HAP-1 (cell line): ENCODE measurements at regions of chr20 and their contacts with region 1.

Region 1: DNA sequence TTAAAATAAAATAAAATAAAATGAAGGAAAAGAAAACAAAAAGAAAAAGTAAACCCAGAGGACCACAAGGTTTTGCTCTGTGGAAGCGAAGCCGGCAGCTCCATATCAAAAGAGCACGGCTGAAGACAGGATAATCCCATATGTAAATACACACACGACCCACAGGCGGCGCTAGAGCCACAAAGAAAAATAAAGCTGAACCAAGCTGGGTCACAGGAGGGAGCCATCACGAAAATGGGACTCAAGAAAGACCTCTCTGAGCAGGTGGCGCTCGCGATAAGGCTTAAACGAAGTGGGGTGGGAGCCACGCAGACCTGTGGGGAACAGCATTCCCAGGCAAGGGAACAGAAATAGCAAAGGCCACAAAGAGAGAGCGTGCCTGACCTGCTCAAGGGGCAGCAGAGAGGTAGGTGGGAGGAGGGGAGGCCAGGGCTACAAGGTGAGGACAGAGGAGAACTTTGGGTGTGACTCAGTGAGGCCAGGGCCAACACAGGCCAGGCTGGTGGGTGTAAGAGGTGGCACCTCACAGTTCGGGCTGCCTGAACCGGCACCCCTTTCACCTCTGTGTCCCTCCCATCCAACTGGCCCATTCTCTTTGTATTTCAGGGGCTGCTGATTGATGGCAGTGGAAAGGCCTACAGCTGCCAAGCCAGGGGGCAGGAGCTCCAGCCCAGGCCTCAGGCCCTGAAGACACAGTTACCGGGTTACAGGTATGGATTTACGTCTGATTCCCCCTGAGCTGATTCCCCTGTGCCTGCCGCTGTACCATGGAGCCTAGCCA is 26.0 kb downstream of the PTGIS start:
- DNase-seq: peak; percentile 58 to 77
- H3K4me3 ChIP-seq: no peak overlapping the region
- H3K4me1 ChIP-seq: no peaks in the 10 kb centered on the region
- H3K27me3 ChIP-seq: no peaks in the 10 kb centered on the region

Region 2: GRCh38 chr20:49888345-49888966 is 346.5 kb after region 1 on chr20:
- in situ Hi-C with region 1: loop called (anchors 10 kb)
- DNase-seq: peak; percentile 71 to 84
- H3K4me3 ChIP-seq: no peak overlapping the region
- H3K4me1 ChIP-seq: peaks cover 2% of the 10 kb centered on the region; the same call in 1 of the 2 replicates
- H3K27me3 ChIP-seq: no peaks in the 10 kb centered on the region